CD14-positive monocyte (primary cell): ENCODE measurements at regions of chr16 and their contacts with region 1.

Region 1: GRCh38 chr16:85330694-85331188 is 218.5 kb upstream of the CIBAR2 start:
- DNase-seq: peak; percentile 29 to 43 (median 38)
- H3K4me3 ChIP-seq: no peak overlapping the region
- H3K4me3 Mint-ChIP-seq: peak overlapping the region in 1 of 2 donors; percentile 56
- H3K27ac ChIP-seq: no peak overlapping the region
- H3K27ac Mint-ChIP-seq: peak overlapping the region in 1 of 7 donors; percentile 5
- H3K4me1 ChIP-seq: peaks cover 9 to 14% of the 10 kb centered on the region in 2 donors
- H3K4me1 Mint-ChIP-seq: peaks cover 26% of the 10 kb centered on the region
- H3K27me3 ChIP-seq: peaks cover 18 to 41% of the 10 kb centered on the region in 2 donors
- H3K27me3 Mint-ChIP-seq: peaks cover 50 to 64% (median 63%) of the 10 kb centered on the region in 3 donors
- CTCF ChIP-seq: peak; percentile 50

Region 2: GRCh38 chr16:85296859-85297660 is 33.7 kb before region 1 on chr16:
- intact Hi-C with region 1: loop called (anchors 2 to 5 kb)
- DNase-seq: peak; percentile 47 to 61 (median 49)
- H3K4me3 ChIP-seq: no peak overlapping the region
- H3K4me3 Mint-ChIP-seq: peak overlapping the region; percentile 37 to 53
- H3K27ac ChIP-seq: no peak overlapping the region
- H3K27ac Mint-ChIP-seq: peak overlapping the region in 1 of 7 donors; percentile 6
- H3K4me1 ChIP-seq: peaks cover under 1 to 4% of the 10 kb centered on the region in 2 donors
- H3K4me1 Mint-ChIP-seq: peaks cover 9% of the 10 kb centered on the region
- H3K27me3 ChIP-seq: no peaks in the 10 kb centered on the region
- H3K27me3 Mint-ChIP-seq: peaks cover 2 to 10% (median 4%) of the 10 kb centered on the region in 3 donors
- CTCF ChIP-seq: peak; percentile 94

Region 3: GRCh38 chr16:85305996-85306792 is 24.5 kb before region 1 on chr16:
- intact Hi-C with region 1: loop called in 1 of 2 experiments (anchors 2 kb)
- DNase-seq: peak; percentile 95 to 97 (median 96)
- H3K4me3 ChIP-seq: peak overlapping the region in 1 of 3 experiments; percentile 10
- H3K4me3 Mint-ChIP-seq: peak overlapping the region; percentile 43 to 63
- H3K27ac ChIP-seq: peak overlapping the region; percentile 31 to 75
- H3K27ac Mint-ChIP-seq: peak overlapping the region; percentile 69 to 91 (median 82)
- H3K4me1 ChIP-seq: peaks cover 75 to 82% of the 10 kb centered on the region in 2 donors
- H3K4me1 Mint-ChIP-seq: peaks cover 68% of the 10 kb centered on the region
- H3K27me3 ChIP-seq: peaks cover 0 to under 1% of the 10 kb centered on the region in 2 donors
- H3K27me3 Mint-ChIP-seq: peaks cover 5 to 8% (median 7%) of the 10 kb centered on the region in 3 donors
- CTCF ChIP-seq: no peak